A673 (cell line): ENCODE measurements at regions of chr2 and their contacts with region 1.

Region 1: GRCh38 chr2:171360905-171361304 is 72.9 kb downstream of the METTL8 start:
- DNase-seq: no peak
- H3K4me3 ChIP-seq: no peak overlapping the region
- H3K27ac ChIP-seq: no peak overlapping the region
- H3K4me1 ChIP-seq: no peaks in the 10 kb centered on the region
- H3K27me3 ChIP-seq: no peaks in the 10 kb centered on the region
- CTCF ChIP-seq: no peak

Region 2: DNA sequence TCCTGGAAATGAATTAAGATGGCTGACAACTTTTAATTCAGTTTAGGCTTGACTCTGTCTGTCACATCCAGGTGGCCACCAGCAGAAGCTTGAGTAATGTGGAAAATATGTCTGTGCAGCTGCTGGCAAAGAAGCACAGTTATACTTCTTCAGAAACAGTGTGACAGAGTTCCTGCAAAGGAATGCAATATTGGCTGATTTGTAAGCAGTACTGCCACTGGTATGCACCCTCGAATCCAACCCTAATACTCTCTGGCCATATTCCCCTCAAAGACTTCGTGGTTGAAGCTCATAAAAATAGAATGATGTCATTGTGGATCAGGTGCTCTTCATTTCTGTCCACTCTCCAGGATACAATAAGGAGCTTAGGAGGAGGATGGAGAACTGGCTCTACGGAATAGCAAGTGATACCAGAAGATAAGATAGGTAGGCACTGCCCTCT is 13.3 kb before region 1 on chr2:
- CTCF ChIA-PET with region 1: no interaction called
- POLR2A ChIA-PET with region 1: no interaction called
- intact Hi-C with region 1: loop called (anchors 1 kb)
- DNase-seq: peak; percentile 25
- H3K4me3 ChIP-seq: no peak overlapping the region
- H3K27ac ChIP-seq: no peak overlapping the region
- H3K4me1 ChIP-seq: peaks cover 5% of the 10 kb centered on the region
- H3K27me3 ChIP-seq: no peaks in the 10 kb centered on the region
- CTCF ChIP-seq: no peak